ENCODE measurements at regions of chr15 and their contacts with region 1.

Region 1: GRCh38 chr15:74768771-74769342 is 13.0 kb upstream of the CSK start:
- DNase-seq: peak in 9 of 10 donors; percentile 55 to 79 (median 73)
- H3K4me3 ChIP-seq: peak overlapping the region in 38 of 59 donors; percentile 2 to 53 (median 28)
- H3K27ac ChIP-seq: no peak overlapping the region
- H3K27me3 ChIP-seq: no peaks in the 10 kb centered on the region
- CTCF ChIP-seq: peak; percentile 70 to 97 (median 88)

Region 2: DNA sequence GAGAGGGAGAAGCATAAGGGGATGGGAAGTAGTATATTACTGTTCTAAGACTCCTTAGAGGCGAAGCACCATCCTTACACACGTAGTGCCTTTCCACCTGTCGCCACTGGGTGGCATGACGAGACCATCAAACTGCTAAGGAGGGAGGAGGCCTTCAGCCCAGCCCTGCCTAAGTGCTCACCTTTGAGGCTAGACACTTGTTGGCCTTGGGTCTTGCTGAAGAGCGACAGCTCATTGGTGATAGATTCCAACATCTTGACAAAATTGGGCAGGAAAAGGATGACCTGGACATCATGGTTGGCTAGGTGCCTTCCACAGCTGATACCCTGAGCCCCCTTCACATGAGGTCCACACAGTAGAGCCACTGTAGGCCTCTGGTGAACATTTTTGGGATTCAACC is 133.6 kb before region 1 on chr15:
- intact Hi-C with region 1: loop called (anchors 1 kb)
- DNase-seq: peak in 8 of 10 donors; percentile 55 to 81 (median 72)
- H3K4me3 ChIP-seq: no peak overlapping the region
- H3K27ac ChIP-seq: peak overlapping the region in 1 of 59 donors; percentile 44
- H3K27me3 ChIP-seq: no peaks in the 10 kb centered on the region
- CTCF ChIP-seq: peak; percentile 61 to 97 (median 91)

Region 3: GRCh38 chr15:74752491-74753020 is 16.3 kb before region 1 on chr15:
- intact Hi-C with region 1: no loop called
- DNase-seq: no peak
- H3K4me3 ChIP-seq: no peak overlapping the region
- H3K27ac ChIP-seq: no peak overlapping the region
- H3K27me3 ChIP-seq: no peaks in the 10 kb centered on the region
- CTCF ChIP-seq: no peak

Region 4: GRCh38 chr15:74799856-74800547 is 31.1 kb after region 1 on chr15:
- intact Hi-C with region 1: loop called (anchors 1 to 2 kb)
- DNase-seq: peak in 7 of 10 donors; percentile 48 to 81 (median 69)
- H3K4me3 ChIP-seq: no peak overlapping the region
- H3K27ac ChIP-seq: peak overlapping the region in 32 of 59 donors; percentile 2 to 70 (median 39)
- H3K27me3 ChIP-seq: no peaks in the 10 kb centered on the region
- CTCF ChIP-seq: peak; percentile 68 to 98 (median 94)

Region 5: DNA sequence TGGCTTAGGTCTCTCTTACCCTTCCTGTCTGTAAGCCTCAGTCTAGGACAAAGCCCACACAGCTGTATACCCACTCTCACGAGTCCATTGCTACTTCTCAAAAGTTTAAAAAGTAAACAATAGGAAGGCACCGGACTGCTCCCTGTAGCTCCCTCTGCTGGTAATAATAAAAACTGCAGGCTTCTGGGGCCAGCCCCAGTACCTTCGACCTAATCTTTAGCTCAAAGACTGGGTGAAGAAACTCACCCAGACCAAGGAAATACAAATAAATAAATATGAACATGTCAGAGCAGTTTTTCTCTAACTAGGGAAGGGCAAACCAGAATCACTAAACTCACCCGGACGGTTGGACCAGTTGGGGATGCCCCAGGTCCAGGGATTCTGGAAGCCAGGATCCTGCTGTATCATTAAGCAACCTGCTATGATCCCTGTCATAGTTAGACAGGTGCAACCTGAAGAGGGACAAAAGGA is 132.8 kb after region 1 on chr15:
- intact Hi-C with region 1: no loop called
- DNase-seq: peak in 8 of 10 donors; percentile 22 to 60 (median 46)
- H3K4me3 ChIP-seq: no peak overlapping the region
- H3K27ac ChIP-seq: peak overlapping the region in 9 of 59 donors; percentile 0 to 56 (median 22)
- H3K27me3 ChIP-seq: no peaks in the 10 kb centered on the region
- CTCF ChIP-seq: peak; percentile 80 to 97 (median 90)

Region 6: DNA sequence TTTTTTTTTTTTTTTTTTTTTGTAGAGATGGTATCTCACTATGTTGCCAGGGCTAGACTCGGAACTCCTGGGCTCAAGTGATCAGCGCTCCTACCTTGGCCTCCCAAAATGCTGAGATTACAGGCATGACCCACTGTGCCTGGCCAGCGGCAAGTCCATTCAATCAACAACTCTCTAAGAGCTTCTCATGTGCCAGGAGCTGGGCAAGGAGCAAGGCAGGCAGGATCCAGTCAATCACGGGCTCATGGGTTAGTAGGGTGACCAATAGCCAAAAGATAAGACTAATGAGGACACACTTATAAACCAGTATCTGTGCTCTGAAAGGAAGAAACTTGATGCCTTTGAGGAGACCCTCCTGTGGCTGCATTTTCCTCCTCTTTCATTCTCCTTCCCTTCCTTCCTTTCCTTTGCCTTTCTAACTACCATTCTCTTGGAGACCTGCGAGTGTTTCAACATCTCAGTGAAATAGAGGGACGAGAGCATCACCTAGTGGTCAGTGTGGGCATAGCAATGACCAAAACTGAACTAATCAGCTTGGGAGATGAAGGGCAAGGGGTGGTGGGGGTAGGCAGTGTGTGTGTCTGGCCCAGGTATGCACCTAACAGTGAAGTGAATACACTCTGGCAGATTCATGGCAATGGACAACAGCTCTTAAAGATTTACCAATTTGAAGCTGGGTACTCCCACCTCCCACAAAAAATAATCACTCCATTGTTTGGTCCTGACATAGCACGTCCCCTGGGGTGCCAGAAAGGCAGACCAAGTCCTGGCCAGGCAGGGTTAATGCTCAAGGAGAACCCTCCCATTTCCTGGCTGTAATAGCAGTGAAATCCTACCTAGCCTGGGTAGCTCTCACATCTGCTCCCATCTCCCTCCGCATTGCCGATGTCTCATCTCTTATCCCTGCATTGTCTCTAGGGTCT is 181.5 kb after region 1 on chr15:
- intact Hi-C with region 1: loop called (anchors 2 to 5 kb)
- DNase-seq: peak; percentile 53 to 90 (median 68)
- H3K4me3 ChIP-seq: peak overlapping the region in 1 of 59 donors; percentile 6
- H3K27ac ChIP-seq: peak overlapping the region in 6 of 59 donors; percentile 1 to 50 (median 37)
- H3K27me3 ChIP-seq: no peaks in the 10 kb centered on the region
- CTCF ChIP-seq: peak; percentile 89 to 99 (median 95)